ENCODE measurements at regions of chr19 and their contacts with region 1.

Region 1: GRCh38 chr19:48513289-48514122 is 1.9 kb upstream of the LMTK3 start:
- DNase-seq: peak; percentile 81

Region 2: GRCh38 chr19:48540110-48540509 is 26.6 kb after region 1 on chr19:
- CTCF ChIA-PET with region 1: no interaction called
- POLR2A ChIA-PET with region 1: interaction called, 10 read pairs
- DNase-seq: peak; percentile 14

Region 3: DNA sequence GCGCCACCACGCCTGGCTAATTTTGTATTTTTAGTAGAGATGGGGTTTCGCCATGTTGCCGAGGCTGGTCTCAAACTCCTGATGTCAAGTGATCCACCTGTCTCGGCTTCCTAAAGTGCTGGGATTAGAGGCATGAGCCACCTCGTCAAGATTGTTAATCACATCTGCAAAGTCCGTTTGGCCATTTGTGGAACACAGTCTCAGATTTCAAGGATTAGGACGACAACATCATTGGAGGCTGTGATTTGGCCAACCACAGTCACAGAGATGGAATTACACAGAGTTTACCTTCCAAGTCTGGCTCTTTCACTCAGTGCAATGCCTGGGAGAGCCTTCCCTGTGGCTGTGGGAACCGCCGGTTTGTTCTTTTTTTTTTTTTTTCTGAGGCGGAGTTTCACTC is 56.3 kb after region 1 on chr19:
- CTCF ChIA-PET with region 1: no interaction called
- POLR2A ChIA-PET with region 1: interaction called, 15 read pairs
- DNase-seq: no peak

Measured in HEK293T (cell line).